ENCODE measurements at regions of chr18 and their contacts with region 1.

Region 1: DNA sequence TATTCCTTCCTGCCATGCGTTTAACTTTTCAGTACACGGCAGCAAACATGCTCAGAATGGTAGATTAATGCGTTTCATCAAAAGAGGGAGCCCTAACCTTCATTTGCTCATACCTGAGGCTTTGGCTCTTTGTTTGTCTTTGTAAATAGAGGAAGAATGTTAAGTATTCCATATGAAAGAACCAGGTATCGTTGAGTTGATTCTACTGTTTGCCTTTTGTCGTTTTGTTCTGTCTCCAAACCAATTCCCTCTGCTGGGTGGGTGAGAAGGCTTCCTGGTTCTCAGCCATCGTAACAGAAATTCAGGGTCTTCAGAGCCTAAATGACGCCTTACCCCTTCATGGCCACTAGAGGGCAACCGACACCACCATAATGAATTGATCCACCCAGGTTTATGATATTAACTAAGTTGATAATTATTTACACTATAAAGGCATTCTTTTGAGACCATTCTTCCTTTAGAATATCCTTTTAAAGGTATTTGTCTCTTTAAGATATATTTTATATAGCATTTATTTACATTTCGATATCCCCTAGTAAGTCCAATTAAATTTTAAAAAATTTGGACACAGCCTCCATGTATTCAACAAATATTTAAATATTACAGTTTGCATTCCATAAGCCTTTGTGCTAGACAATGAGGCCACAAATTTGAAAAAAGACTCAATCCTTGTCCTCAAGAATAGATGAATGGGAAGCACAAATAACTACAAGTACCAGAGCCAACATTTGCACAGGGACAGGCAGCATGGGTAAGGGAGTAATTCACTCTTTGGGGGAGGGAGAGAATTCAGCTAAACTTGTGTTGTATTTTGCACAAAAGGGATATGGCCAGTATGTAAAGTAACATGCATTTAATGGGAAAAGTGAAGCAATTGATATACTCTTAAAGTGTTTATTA is 48.1 kb downstream of the TIMM21 start:
- DNase-seq: peak; percentile 51 to 60
- H3K4me3 ChIP-seq: peak overlapping the region; percentile 24; the same call in 1 of the 2 replicates
- H3K4me3 Mint-ChIP-seq: peak overlapping the region; percentile 43
- H3K27ac Mint-ChIP-seq: no peak overlapping the region
- H3K4me1 ChIP-seq: no peaks in the 10 kb centered on the region
- H3K4me1 Mint-ChIP-seq: peaks cover 9% of the 10 kb centered on the region
- H3K27me3 ChIP-seq: no peaks in the 10 kb centered on the region
- H3K27me3 Mint-ChIP-seq: no peaks in the 10 kb centered on the region
- CTCF ChIP-seq: peak; percentile 26 to 61

Region 2: DNA sequence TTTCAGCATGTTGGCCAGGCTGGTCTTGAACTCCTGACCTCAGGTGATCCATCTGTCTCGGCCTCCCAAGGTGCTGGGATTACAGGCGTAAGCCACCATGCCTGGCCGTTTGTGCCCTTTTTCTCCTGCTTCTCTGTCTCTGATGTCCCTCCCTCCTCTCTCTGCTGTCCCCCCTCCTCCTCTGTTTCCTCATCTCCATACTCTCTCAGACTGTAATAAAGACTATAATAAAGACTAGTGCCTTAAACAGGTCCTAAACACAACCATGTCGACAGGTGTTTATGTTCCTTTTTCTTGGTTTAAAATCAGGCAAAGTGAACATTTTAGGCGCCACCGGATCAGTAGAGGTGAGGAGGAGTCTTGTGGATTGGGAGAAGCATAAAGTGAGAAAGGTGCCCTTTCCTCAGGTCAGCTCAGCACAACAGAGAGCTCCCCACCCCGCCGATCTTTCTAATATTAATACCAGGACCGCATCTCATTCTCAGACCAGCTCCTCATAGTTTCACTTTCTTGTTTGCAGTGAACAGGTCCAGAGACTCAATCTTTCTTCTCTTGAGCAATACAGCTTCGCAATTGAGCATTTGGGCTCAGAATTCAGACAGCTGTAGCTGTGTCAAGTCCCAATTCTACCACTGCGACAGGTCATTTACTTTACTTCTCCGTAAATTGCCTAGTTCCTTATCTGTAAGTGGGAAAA is 24.4 kb before region 1 on chr18:
- CTCF ChIA-PET with region 1: no interaction called
- POLR2A ChIA-PET with region 1: no interaction called
- intact Hi-C with region 1: loop called (anchors 1 kb)
- DNase-seq: no peak
- H3K4me3 ChIP-seq: peak overlapping the region; percentile 21
- H3K4me3 Mint-ChIP-seq: peak overlapping the region; percentile 75
- H3K27ac Mint-ChIP-seq: no peak overlapping the region
- H3K4me1 ChIP-seq: no peaks in the 10 kb centered on the region
- H3K4me1 Mint-ChIP-seq: peaks cover 10% of the 10 kb centered on the region
- H3K27me3 ChIP-seq: no peaks in the 10 kb centered on the region
- H3K27me3 Mint-ChIP-seq: peaks cover 4% of the 10 kb centered on the region
- CTCF ChIP-seq: no peak

Region 3: DNA sequence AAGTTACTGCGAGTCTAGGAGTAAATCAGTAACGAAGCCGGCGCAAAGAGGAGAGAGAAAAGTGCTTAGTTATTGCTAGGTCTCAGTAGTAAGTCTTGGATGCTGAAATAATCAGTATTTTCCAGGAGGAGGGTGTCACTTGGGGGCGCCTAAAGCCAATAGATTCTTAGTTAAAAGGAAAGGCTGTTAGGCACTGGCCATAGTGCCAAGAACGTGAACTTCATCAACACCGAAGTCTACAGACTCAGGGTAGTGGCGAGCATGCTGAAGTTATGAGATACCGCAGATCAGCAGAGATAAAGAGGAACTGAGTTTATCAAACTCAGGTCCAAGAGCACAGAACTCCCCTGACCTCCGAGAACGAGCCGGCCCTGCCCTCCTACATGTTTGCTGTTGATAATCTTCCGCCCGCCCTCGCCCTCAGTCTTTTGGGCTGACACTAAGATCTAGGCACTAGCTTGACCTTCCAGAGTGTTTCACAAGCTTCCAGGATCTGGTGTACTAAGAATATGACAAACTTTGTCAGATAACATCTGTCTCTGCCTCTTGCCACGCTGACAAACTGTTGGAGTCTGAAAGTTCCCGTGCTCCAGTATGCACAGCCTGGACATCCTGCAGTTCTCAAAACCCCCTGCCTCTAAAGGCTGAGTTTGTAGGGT is 46.1 kb after region 1 on chr18:
- CTCF ChIA-PET with region 1: interaction called, 3 read pairs
- POLR2A ChIA-PET with region 1: no interaction called
- intact Hi-C with region 1: loop called (anchors 2 kb)
- DNase-seq: peak; percentile 25 to 40
- H3K4me3 ChIP-seq: peak overlapping the region; percentile 23
- H3K4me3 Mint-ChIP-seq: peak overlapping the region; percentile 60
- H3K27ac Mint-ChIP-seq: no peak overlapping the region
- H3K4me1 ChIP-seq: peaks cover 11% of the 10 kb centered on the region; the same call in 1 of the 2 replicates
- H3K4me1 Mint-ChIP-seq: peaks cover 9% of the 10 kb centered on the region
- H3K27me3 ChIP-seq: no peaks in the 10 kb centered on the region
- H3K27me3 Mint-ChIP-seq: no peaks in the 10 kb centered on the region
- CTCF ChIP-seq: no peak

Region 4: DNA sequence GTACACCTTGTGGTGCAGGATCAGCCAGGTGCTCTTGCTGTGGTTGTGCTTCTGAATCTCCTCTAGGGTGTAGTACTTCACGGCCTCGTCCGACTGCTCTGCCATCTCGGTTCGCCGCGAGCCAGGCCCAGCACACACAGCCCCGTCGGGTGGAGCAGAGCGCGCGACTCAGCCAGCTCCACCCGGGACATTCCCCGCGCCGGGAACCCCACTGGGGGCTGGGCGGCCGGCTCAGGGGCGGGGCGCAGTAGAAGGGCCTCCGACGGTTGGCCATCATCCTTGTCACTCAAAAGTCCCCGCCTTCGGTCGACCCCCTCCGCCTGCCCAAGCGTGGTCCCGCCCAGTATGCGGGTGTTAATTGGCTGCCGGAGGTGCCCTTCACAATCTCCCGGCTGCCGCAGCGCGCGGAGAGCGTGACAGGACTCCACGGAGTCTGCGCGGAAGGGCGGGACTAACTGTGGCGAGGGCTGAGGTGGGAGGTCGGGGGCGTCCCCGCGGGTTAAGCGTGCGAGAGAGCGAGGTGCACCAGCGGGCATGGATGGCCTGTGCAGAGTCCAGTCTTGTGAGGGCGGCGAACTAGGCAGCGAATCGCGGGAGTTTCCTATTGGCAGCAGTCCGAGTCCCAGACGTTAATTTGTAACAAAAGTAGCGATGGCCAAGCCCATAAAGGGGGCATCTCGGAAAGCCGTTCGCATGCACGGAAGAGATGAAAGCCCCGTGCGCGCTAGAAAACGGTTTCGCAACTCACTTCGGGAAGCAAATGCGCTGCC is 95.5 kb after region 1 on chr18 and contains the start of gene CYB5A:
- CTCF ChIA-PET with region 1: interaction called, 3 read pairs
- POLR2A ChIA-PET with region 1: no interaction called
- intact Hi-C with region 1: loop called (anchors 1 kb)
- DNase-seq: peak; percentile 94 to 95
- H3K4me3 ChIP-seq: peak within 1 kb of the TSS; percentile 58
- H3K4me3 Mint-ChIP-seq: peak within 1 kb of the TSS; percentile 78
- H3K27ac Mint-ChIP-seq: peak within 1 kb of the TSS; percentile 54
- H3K4me1 ChIP-seq: 0 out of 2 replicates have a peak, but pooled peaks cover 5% of the 10 kb centered on the region
- H3K4me1 Mint-ChIP-seq: peaks cover 10% of the 10 kb centered on the region
- H3K27me3 ChIP-seq: no peaks in the 10 kb centered on the region
- H3K27me3 Mint-ChIP-seq: no peaks in the 10 kb centered on the region
- CTCF ChIP-seq: no peak
- total RNA-seq, gene CYB5A: 103 and 105 TPM in 2 replicates

Region 5: GRCh38 chr18:74331404-74331803 is 134.9 kb after region 1 on chr18:
- CTCF ChIA-PET with region 1: no interaction called
- POLR2A ChIA-PET with region 1: no interaction called
- intact Hi-C with region 1: loop called (anchors 1 kb)
- DNase-seq: peak in 1 of 2 experiments; percentile 19
- H3K4me3 ChIP-seq: no peak overlapping the region
- H3K4me3 Mint-ChIP-seq: no peak overlapping the region
- H3K27ac Mint-ChIP-seq: no peak overlapping the region
- H3K4me1 ChIP-seq: peaks cover 25% of the 10 kb centered on the region
- H3K4me1 Mint-ChIP-seq: peaks cover 17% of the 10 kb centered on the region
- H3K27me3 ChIP-seq: no peaks in the 10 kb centered on the region
- H3K27me3 Mint-ChIP-seq: no peaks in the 10 kb centered on the region
- CTCF ChIP-seq: peak; percentile 18 to 19

Region 6: GRCh38 chr18:74342416-74343043 is 146.1 kb after region 1 on chr18:
- CTCF ChIA-PET with region 1: interaction called, 3 read pairs
- POLR2A ChIA-PET with region 1: no interaction called
- intact Hi-C with region 1: loop called (anchors 1 kb)
- DNase-seq: peak in 1 of 2 experiments; percentile 26
- H3K4me3 ChIP-seq: no peak overlapping the region
- H3K4me3 Mint-ChIP-seq: no peak overlapping the region
- H3K27ac Mint-ChIP-seq: no peak overlapping the region
- H3K4me1 ChIP-seq: no peaks in the 10 kb centered on the region
- H3K4me1 Mint-ChIP-seq: peaks cover 3% of the 10 kb centered on the region
- H3K27me3 ChIP-seq: no peaks in the 10 kb centered on the region
- H3K27me3 Mint-ChIP-seq: no peaks in the 10 kb centered on the region
- CTCF ChIP-seq: peak; percentile 24 to 40